Activated B cell treated with CpG ODN at 0.5 μM for 24 hours (primary cell): ENCODE measurements at regions of chr12 and their contacts with region 1.

Region 1: DNA sequence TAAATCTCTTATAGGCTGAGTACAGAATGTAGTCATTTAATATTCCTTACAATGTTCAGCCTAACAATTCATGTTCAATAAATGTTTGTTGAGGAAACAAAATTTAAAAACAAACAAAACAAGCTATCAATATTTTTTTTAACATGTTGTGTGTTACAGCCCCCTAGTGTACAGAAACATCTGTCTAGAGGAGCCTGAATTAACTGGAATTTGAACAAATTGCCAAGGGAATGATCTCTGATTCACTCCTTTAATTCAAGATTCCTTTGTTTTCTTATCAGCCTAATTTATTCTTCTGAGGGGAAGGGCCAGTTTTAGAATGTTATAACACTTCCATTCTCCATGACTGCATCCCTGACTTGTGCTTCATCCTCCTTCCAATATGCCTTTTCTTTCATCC is 127.2 kb downstream of the CMAS start:
- DNase-seq: no peak
- ATAC-seq: no peak
- H3K4me3 Mint-ChIP-seq: no peak overlapping the region
- H3K27ac Mint-ChIP-seq: no peak overlapping the region
- H3K4me1 Mint-ChIP-seq: no peaks in the 10 kb centered on the region
- H3K27me3 Mint-ChIP-seq: peaks cover 2% of the 10 kb centered on the region
- CTCF ChIP-seq: no peak

Region 2: GRCh38 chr12:22100958-22101748 is 72.0 kb before region 1 on chr12:
- CTCF ChIA-PET with region 1: interaction called, 5 read pairs
- POLR2A ChIA-PET with region 1: no interaction called
- intact Hi-C with region 1: loop called (anchors 1 kb)
- DNase-seq: no peak
- ATAC-seq: peak; percentile 52
- H3K4me3 Mint-ChIP-seq: no peak overlapping the region
- H3K27ac Mint-ChIP-seq: no peak overlapping the region
- H3K4me1 Mint-ChIP-seq: peaks cover 11% of the 10 kb centered on the region
- H3K27me3 Mint-ChIP-seq: peaks cover 8% of the 10 kb centered on the region
- CTCF ChIP-seq: no peak

Region 3: DNA sequence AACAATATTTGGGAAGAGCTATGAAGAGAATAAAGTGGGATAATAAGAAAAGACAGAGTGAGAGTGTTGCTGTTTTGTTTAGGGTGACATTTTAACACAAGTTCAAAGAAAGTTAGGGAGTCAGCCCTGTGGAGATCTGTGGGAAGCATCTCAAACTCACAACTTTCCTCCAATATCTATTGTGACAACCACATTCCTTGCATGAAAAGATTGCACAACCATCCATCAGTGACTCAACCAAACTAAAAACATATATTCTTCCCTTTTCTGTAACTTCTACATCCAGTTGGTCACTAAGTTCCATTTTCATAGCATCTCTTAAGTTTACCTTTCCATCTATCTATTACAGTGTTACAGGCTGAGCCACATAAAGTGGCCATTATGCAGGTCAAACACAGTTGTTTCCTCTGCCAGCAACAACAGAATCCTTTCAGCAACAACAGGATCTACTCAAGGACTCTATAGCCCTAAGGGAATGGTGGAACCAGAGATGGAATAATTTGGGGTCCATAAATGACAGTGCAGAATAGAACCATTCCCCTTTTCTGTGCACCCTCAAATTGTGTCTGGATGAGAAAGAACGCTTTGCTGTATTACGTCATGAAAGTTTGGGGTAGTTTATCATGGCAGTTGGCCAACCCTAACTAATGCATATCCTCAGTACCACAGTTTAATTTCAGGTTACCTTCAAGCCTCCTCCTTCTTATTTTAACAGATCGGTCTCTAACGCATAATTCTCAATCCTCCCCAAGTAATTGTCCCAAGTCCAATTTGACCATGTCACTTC is 42.5 kb after region 1 on chr12:
- CTCF ChIA-PET with region 1: no interaction called
- POLR2A ChIA-PET with region 1: no interaction called
- intact Hi-C with region 1: no loop called
- DNase-seq: no peak
- ATAC-seq: no peak
- H3K4me3 Mint-ChIP-seq: no peak overlapping the region
- H3K27ac Mint-ChIP-seq: no peak overlapping the region
- H3K4me1 Mint-ChIP-seq: no peaks in the 10 kb centered on the region
- H3K27me3 Mint-ChIP-seq: peaks cover 5% of the 10 kb centered on the region
- CTCF ChIP-seq: no peak